Sigmoid colon (tissue), 7 donors: ENCODE measurements at regions of chr19 and their contacts with region 1.

Region 1: DNA sequence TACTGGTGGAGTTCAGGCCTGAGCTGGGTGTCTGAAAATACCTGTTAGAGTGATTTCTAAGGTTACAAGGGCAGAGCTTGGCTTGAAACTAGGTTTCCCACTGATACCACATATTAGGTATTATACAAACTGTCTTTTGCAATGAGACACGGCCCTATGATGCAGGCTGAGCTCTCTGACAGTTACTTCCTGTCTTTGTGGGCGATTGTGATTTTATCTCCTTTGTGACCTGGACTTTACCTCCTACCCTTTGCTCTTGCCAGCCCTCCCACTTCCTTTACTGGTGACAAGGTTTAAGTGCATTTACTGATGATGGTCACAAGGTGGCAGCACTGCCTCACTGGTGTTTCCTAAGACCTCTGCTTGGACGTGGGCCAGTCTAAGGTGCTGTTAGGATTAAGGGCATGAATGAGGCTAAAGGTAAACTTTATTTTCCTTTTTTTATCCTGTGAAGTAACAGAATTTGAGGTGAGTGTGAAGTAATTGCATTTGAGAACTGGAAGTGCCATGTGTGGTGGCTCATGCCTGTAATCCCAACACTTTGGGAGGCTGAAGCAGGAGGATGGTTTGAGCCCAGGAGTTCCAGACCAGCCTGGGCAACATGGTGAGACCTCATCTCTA is 7.7 kb upstream of the CXCL17 start:
- DNase-seq: peak; percentile 89
- H3K4me3 ChIP-seq: no peak overlapping the region
- H3K27ac ChIP-seq: no peak overlapping the region
- H3K4me1 ChIP-seq: no peaks in the 10 kb centered on the region
- H3K27me3 ChIP-seq: no peaks in the 10 kb centered on the region
- CTCF ChIP-seq: peak; percentile 60 to 89 (median 77)
- EP300 ChIP-seq: no peak
- POLR2A ChIP-seq: no peak

Region 2: DNA sequence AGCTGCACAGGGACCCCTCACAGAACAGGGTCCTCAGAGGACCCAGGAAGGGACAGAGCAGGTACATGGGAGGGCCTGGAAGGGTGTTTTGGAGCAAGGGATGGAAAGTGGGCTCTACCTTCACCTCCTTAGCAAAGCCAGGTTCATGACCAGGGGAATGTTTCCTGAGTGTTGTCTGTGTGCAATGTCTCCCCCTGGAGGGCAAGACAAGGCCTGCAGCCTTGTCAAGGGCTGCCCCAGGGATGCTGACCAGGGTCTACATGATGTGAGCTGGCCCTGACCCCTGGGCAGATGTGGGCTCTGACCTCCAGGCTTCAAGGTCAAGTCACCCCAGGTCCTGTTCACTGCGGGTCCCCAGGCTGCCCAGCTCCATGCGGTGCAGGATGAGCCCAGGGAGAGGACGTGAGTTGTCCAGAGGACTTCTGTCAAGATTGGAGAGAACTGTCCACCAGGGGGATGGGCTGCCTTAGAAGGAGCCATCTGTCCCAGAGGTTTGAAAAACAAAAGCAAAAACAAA is 78.9 kb after region 1 on chr19:
- intact Hi-C with region 1: loop called (anchors 1 kb)
- DNase-seq: no peak
- H3K4me3 ChIP-seq: no peak overlapping the region
- H3K27ac ChIP-seq: peak overlapping the region in 2 of 4 donors; percentile 29 to 42
- H3K4me1 ChIP-seq: peaks cover 0 to 4% (median 0%) of the 10 kb centered on the region in 4 donors
- H3K27me3 ChIP-seq: no peaks in the 10 kb centered on the region
- CTCF ChIP-seq: peak; percentile 37 to 72 (median 62)
- EP300 ChIP-seq: no peak
- POLR2A ChIP-seq: no peak